OCI-LY7 (cell line): ENCODE measurements at regions of chr22 and their contacts with region 1.

Region 1: DNA sequence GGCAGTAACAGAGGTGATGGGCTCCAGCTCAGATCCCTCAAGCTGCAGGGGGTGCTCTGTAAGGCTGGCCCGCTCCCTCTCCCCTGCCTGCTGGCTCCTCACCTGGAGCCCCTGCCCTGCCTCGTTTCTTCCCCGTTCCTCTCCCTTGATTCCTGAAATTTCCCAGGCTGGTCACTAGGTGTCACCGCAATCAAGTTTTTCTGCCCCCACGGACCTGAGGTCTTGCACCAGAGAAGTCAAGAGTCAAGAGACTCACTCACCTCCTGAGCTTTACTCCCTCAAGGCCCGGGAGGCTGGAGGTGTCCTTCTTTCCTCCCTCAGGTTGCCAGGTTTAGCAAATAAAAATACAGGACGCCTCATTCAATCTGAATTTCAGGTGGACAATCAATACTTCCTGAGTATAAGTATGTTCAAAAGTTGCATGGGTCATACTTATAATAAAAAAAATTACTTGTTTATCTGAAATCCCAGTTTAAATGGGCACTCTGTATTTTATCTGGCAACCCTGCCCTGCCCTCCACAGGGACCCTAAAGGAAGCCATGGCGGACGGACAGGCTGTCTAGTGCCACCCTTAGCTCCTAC is 69.2 kb downstream of the SCUBE1 start:
- DNase-seq: peak; percentile 55
- H3K4me3 ChIP-seq: no peak overlapping the region
- H3K27ac ChIP-seq: no peak overlapping the region
- H3K4me1 ChIP-seq: no peaks in the 10 kb centered on the region
- CTCF ChIP-seq: peak; percentile 81

Region 2: DNA sequence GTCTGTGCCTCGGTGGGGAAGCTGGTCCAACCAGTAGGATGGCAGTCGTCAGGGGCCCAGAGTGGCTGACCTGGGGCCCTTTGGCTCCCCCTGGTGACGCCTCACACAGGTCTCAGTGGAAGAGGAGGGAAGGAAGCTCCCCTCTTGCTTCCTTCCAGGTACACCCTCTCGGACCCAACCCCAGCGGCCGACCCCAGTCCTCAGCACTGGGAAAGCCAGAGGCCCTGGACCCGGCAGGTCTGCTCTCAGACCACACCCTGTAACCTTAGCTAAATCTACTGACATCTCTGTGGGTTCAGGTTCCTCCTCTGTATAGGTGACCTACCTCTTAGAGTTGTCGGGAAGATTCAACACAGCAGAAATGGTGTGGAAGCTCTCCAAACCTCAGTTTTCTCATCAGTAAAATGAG is 72.5 kb after region 1 on chr22:
- CTCF ChIA-PET with region 1: interaction called, 11 read pairs
- POLR2A ChIA-PET with region 1: no interaction called
- intact Hi-C with region 1: loop called (anchors 1 kb)
- DNase-seq: peak; percentile 55
- H3K4me3 ChIP-seq: no peak overlapping the region
- H3K27ac ChIP-seq: no peak overlapping the region
- H3K4me1 ChIP-seq: no peaks in the 10 kb centered on the region
- CTCF ChIP-seq: peak; percentile 84

Region 3: DNA sequence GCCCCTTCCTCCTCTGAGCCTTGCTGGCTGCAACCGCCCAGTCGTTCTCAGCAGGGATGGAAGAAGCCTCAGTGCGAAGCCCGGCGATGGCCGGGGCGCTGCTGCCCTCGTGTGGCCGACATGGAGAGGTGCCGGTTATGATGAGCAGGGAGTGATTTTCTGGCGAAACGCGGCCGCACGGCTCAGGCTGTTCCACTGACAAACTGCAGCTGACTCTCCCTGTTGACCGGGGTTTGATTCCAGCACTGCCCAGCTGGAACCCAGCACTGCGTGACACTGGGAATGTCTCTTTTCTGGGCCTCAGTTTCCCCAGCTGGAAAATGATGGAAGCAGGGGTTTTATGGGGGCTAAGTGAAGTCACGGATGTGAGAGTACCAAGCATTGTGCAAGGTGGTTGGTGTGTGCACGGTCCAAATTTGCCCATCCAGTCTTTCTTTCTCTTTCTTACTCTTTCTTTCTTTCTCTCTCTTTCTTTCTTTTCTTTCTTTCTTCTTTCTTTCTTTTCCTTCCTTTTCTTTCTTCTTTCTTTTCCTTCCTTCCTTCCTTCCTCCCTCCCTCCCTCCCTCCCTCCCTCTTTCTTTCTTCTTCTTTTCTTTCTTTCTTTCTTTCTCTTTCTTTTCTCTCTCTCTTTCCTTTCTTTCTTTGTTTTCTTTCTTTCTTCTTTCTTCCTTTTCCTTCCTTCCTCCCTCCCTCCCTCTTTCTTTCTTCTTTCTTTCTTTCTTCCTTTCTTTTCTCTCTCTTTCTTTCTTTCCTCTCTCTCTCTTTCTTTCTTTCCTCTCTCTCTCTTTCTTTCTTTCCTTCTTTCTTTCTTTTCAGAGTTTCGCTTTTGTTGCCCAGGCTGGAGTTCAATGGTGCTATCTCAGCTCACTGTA is 112.0 kb after region 1 on chr22:
- CTCF ChIA-PET with region 1: no interaction called
- POLR2A ChIA-PET with region 1: no interaction called
- intact Hi-C with region 1: loop called (anchors 1 kb)
- DNase-seq: peak; percentile 68
- H3K4me3 ChIP-seq: no peak overlapping the region
- H3K27ac ChIP-seq: no peak overlapping the region
- H3K4me1 ChIP-seq: no peaks in the 10 kb centered on the region
- CTCF ChIP-seq: peak; percentile 88